A549 (cell line): ENCODE measurements at regions of chr11 and their contacts with region 1.

Region 1: DNA sequence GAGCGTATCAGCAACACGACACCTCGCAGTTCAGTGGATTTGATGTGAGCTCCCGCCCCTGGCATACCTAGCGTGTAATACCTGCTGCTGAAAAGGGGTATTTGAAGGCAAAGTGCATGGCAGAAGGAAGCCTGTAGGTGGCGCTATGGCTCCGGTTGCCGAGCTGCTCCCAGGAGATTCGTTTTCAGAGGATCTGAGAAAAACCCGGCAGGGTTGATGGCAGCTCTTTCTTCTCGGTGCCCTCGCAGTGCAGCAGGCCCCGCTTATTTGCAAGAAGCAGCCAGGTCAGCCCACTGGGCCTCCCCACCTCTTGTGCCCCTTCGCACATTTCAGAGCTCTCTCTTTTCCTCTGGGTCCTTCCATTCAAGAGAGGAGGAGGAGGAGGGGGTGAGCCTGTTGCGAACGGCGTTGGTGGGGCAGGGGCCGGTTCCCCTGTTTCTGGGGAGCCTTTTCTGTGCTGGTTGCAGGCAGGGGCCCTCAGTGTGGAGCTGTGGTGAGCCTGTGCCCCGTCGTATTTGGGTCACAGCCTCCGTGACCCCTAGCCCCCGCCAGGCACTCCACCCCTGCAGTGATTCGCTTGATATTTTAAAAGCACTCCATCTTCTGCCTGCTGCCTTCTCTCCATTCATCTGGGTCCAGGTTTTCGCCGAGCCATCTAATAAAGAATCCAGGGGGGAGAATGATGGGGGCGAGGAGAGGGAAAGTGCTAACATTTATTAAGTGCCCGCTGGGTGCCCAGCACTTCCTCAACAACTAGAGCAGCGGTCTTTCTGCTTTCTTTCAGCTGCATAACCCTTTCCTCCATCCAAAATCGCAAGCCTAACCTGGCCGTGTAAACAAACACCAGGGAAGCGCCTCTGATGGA is 85.3 kb upstream of the SYT13 start:
- DNase-seq: peak; percentile 68 to 84
- ATAC-seq: peak; percentile 60 to 92
- H3K4me3 ChIP-seq: no peak overlapping the region
- H3K27ac ChIP-seq: no peak overlapping the region
- H3K4me1 ChIP-seq: no peaks in the 10 kb centered on the region
- CTCF ChIP-seq: peak; percentile 82
- EP300 ChIP-seq: no peak
- POLR2A ChIP-seq: no peak
- RAD21 ChIP-seq: peak; percentile 77 to 91

Region 2: DNA sequence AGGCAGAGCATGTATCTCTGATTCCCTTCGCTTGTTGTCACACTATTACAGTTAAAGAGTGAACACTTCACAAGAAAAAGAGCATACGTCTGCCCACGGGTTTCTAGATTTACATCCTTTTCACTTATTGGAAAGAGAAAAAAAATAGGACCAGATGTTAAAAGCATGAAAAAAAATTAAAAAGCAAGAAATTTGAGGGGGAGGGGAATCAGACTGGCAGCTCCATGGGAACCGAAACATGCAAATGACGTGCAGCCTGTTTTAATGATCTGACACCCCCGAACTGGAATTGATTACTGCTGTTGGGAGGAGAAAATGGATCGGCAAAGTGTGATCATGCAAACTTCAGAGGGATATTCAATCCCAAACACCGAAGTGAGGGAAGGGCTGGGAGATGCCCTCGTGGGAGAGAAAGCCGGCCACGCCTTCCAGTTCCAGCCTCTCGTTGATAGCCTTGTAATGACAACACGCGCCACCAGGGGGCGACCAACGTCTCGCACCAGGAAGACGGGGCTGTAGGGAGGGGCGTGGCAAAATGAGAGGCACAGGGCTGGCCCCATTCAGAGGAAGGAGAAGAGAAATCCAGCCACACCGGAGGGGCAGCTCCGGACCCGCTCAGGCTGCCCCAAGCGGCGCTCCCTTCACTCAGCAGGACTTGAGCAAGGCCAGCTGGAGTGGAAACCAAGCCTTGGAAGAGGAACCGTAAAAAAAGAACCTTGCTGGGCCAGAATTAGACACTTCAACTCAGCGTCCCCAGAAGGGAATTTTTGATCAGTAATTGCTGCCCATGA is 31.6 kb before region 1 on chr11:
- CTCF ChIA-PET with region 1: interaction called, 11 read pairs
- POLR2A ChIA-PET with region 1: no interaction called
- DNase-seq: peak; percentile 91 to 95
- ATAC-seq: peak; percentile 90 to 99
- H3K4me3 ChIP-seq: peak overlapping the region; percentile 32
- H3K27ac ChIP-seq: no peak overlapping the region
- H3K4me1 ChIP-seq: no peaks in the 10 kb centered on the region
- CTCF ChIP-seq: peak; percentile 81
- EP300 ChIP-seq: no peak
- POLR2A ChIP-seq: no peak
- RAD21 ChIP-seq: peak; percentile 64 to 66

Region 3: DNA sequence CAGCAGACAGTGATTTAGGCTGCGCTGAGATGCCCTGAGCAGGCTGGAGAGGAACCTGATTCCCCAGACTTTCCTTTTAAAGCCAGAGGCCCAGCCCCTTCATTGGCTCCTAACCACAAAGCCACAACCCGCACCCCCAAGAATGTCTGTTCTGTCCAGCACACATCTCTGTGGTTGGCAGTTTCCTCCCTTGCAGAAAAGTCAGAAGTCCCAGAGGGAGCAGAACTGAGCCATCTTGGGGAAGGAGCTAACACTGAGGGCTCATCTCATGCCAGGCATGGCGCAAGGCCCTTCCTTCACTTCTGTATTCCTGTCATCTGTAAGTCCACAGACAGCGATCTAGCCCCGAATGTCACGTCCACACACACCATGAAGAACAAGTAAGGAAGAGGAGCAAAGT is 11.7 kb after region 1 on chr11:
- CTCF ChIA-PET with region 1: interaction called, 28 read pairs
- POLR2A ChIA-PET with region 1: no interaction called
- DNase-seq: no peak
- ATAC-seq: no peak; a peak in 1 of 6 replicates
- H3K4me3 ChIP-seq: no peak overlapping the region
- H3K27ac ChIP-seq: no peak overlapping the region
- H3K4me1 ChIP-seq: no peaks in the 10 kb centered on the region
- CTCF ChIP-seq: no peak
- EP300 ChIP-seq: no peak
- POLR2A ChIP-seq: no peak
- RAD21 ChIP-seq: no peak

Region 4: DNA sequence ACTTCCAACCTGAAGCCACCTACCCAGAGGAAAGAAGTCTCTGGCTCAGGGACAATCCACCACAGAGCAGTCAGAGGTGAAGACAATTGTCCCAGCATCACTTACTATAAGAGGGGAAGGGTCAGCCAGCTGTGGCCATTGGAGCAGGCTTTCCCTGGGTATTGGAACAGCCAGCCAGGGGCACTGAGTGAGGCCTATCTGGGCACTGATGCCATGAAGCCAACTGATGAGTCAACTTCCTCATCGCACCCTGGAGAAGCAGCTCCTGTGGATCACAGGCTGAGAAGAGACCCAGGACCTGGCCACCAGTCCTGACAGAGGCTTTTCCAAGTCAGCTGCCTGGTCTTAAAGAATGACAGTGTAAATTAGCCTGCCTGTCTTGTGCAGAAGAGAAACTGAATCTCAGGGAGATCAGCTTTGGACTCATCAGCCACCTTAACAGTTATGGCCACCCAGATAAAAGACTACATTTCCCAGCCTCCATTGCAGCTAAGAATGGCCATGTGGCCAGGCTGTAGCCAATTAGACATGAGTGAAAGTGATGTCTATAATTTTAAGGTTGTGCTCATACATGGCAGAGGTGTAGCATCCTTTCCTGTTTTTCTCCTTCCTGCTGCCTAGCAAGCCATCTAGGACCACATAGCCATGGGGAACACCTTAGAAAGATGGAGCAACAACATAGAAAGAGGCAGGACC is 274.9 kb after region 1 on chr11:
- CTCF ChIA-PET with region 1: interaction called, 149 read pairs
- POLR2A ChIA-PET with region 1: no interaction called
- DNase-seq: peak in 1 of 2 experiments; percentile 17
- ATAC-seq: peak in 1 of 2 experiments; percentile 85; a peak in 3 of 6 replicates
- H3K4me3 ChIP-seq: no peak overlapping the region
- H3K27ac ChIP-seq: no peak overlapping the region
- H3K4me1 ChIP-seq: no peaks in the 10 kb centered on the region
- CTCF ChIP-seq: no peak
- EP300 ChIP-seq: no peak
- POLR2A ChIP-seq: no peak
- RAD21 ChIP-seq: no peak

Region 5: GRCh38 chr11:45704635-45705034 is 333.2 kb after region 1 on chr11:
- CTCF ChIA-PET with region 1: interaction called, 10 read pairs
- POLR2A ChIA-PET with region 1: no interaction called
- DNase-seq: no peak
- ATAC-seq: no peak
- H3K4me3 ChIP-seq: no peak overlapping the region
- H3K27ac ChIP-seq: no peak overlapping the region
- H3K4me1 ChIP-seq: no peaks in the 10 kb centered on the region
- CTCF ChIP-seq: no peak
- EP300 ChIP-seq: no peak
- POLR2A ChIP-seq: no peak
- RAD21 ChIP-seq: no peak

Region 6: DNA sequence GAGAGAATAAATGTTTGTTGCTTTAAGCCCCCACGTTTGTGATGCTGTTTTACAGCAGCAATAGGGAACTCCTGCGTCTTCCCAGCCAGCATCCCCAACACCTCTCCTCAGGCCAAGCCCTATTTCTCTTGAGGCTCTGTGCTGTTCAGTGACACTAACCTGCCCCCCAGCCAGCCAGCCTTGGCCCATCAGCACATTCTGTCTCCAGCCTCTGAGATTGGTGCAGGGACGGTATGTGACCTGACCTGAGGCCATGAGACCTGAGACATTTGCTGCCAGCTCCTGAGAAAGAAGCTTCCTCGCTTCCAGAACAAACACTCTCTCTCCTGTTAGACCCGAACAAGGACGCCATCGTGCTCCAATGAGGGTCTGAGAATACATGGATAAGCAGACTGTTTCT is 395.0 kb after region 1 on chr11:
- CTCF ChIA-PET with region 1: interaction called, 97 read pairs
- POLR2A ChIA-PET with region 1: interaction called, 7 read pairs
- DNase-seq: no peak
- ATAC-seq: no peak
- H3K4me3 ChIP-seq: no peak overlapping the region
- H3K27ac ChIP-seq: no peak overlapping the region
- H3K4me1 ChIP-seq: no peaks in the 10 kb centered on the region
- CTCF ChIP-seq: no peak
- EP300 ChIP-seq: no peak
- POLR2A ChIP-seq: no peak
- RAD21 ChIP-seq: no peak